ENCODE measurements at regions of chr11 and their contacts with region 1.

Region 1: DNA sequence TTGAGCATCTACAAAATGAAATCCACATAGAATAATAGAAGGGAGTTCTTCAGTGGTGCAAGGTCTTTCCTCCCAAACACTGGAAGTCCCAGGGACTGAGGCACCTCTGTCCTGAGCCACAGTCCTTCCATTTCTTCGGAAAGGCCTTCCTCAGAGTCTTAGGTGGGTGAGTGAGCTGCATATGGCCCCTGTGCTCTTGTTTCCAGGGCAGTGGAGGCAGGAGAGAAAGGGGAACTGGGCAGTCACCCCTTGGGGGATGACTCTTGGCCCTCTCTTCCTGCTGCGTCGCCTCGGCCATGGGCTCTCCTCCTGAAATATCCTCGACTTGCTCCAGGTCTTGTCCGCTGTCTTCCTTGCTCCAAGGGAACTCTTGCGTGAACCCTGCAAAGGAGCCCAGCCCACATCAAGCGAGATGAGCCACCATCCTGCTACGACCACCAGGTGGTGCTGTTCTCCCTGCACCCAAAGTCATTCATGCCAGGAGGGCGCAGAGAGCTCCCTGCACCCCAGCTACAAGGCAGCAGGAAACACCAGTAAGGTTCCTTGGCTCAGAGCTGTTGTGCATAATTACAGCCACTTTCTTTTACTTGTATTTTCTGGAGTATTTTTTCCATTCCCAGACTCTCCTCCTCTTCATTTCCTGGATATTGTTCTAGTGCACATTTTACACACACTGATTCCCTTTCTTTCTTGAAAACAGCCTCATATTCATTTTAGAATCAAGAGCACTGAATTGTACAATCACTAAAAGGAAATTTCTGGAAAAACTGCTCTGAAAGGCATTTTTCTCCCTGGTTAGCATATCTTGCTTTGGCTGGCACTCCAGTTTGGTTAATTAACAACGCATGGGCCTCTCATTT is 397.8 kb downstream of the OPCML start:
- DNase-seq: peak; percentile 38 to 46
- ATAC-seq: peak in 7 of 8 donors; percentile 51 to 82 (median 73)
- H3K4me3 ChIP-seq: no peak overlapping the region
- H3K27ac ChIP-seq: no peak overlapping the region
- H3K4me1 ChIP-seq: peaks cover 0 to 15% (median 3%) of the 10 kb centered on the region in 9 donors
- H3K27me3 ChIP-seq: peaks cover 0 to 14% (median 0%) of the 10 kb centered on the region in 7 donors
- CTCF ChIP-seq: peak; percentile 75 to 94 (median 85)

Region 2: DNA sequence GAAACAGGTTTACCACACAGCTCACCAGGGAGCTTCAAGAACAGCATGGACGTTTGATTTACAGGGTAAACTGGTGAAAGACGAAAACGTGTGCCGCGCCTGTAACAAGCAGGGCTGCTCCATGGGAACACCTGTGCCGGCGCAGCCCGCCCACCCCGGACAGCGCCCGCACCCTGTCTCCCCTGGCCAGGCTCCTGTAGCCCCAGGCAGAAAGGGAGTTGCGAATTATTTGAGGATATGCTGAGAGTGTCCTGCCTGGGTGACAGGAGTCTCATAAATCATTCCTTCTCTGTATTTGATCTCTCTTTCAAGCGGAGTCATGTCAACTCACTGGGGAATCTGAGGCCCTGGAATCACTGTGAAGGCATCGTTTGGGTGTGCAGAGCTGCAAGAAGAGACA is 406.5 kb before region 1 on chr11:
- intact Hi-C with region 1: no loop called
- DNase-seq: no peak
- ATAC-seq: no peak
- H3K4me3 ChIP-seq: no peak overlapping the region
- H3K27ac ChIP-seq: no peak overlapping the region
- H3K4me1 ChIP-seq: no peaks in the 10 kb centered on the region
- H3K27me3 ChIP-seq: peaks cover 0 to 5% (median 0%) of the 10 kb centered on the region in 7 donors
- CTCF ChIP-seq: no peak

Region 3: GRCh38 chr11:132898021-132898420 is 236.5 kb before region 1 on chr11:
- intact Hi-C with region 1: no loop called
- DNase-seq: no peak
- ATAC-seq: no peak
- H3K4me3 ChIP-seq: no peak overlapping the region
- H3K27ac ChIP-seq: no peak overlapping the region
- H3K4me1 ChIP-seq: no peaks in the 10 kb centered on the region
- H3K27me3 ChIP-seq: peaks cover 0 to 3% (median 0%) of the 10 kb centered on the region in 7 donors
- CTCF ChIP-seq: no peak

Region 4: GRCh38 chr11:133834682-133835592 is 700.4 kb after region 1 on chr11:
- intact Hi-C with region 1: loop called in 8 of 10 experiments (anchors 1 to 10 kb)
- DNase-seq: peak in 1 of 2 donors; percentile 43
- ATAC-seq: peak; percentile 29 to 90 (median 86)
- H3K4me3 ChIP-seq: no peak overlapping the region
- H3K27ac ChIP-seq: no peak overlapping the region
- H3K4me1 ChIP-seq: no peaks in the 10 kb centered on the region
- H3K27me3 ChIP-seq: peaks cover 0 to 40% (median 3%) of the 10 kb centered on the region in 7 donors
- CTCF ChIP-seq: peak in 8 of 9 donors; percentile 46 to 79 (median 66)

Measured in heart right ventricle (tissue), 16 donors.